SK-N-SH (cell line): ENCODE measurements at regions of chr5 and their contacts with region 1.

Region 1: DNA sequence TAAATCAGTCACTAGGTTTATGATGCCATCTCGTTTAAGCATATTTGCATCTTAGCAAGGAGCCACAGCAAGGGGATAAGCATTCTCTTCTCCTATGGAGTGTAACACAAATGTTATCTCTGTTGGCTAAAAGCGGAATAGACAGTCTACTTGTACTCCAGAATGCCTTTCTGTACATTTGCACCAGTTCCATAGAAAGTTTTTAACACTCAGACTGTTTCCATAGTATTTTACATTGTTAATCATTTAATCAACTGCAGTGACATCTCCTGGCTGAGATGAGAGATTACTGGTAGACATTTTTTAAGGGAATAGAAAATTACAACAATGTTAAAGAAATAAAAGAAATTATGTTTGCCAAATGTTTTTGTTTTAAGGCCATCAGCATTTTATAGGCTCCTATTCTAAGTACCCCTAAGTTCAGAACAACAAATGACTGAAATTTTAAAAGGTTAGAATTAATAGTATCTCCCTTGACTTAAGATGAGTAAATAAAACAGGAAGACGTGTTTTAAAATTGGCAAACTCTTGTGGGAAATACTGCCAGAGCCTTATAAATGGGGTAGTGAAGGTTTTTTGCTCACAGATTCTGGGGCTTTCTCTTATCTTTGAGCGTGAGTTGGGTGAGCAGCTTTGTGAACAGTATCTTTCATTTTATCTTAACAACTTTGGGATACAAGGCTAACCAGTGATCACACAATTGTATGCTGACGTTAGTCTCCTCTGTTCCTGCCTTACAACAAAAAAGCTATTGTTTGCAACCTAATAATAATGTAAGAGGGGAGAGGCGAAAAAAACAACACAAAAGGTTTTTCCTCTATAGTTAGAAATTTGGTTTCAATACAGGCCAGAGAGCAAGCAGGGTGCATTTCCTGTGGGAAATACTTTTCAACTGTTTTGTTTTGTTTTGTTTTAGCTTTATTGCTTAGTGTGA is 294.3 kb downstream of the FBXL7 start:
- DNase-seq: peak; percentile 26
- H3K4me3 ChIP-seq: no peak overlapping the region
- H3K27ac ChIP-seq: peak overlapping the region in 1 of 2 experiments; percentile 67; a peak in 2 of 4 replicates
- H3K4me1 ChIP-seq: peaks cover 12 to 31% of the 10 kb centered on the region in 2 experiments
- H3K27me3 ChIP-seq: no peaks in the 10 kb centered on the region
- CTCF ChIP-seq: peak; percentile 62
- EP300 ChIP-seq: no peak
- RAD21 ChIP-seq: peak; percentile 67

Region 2: DNA sequence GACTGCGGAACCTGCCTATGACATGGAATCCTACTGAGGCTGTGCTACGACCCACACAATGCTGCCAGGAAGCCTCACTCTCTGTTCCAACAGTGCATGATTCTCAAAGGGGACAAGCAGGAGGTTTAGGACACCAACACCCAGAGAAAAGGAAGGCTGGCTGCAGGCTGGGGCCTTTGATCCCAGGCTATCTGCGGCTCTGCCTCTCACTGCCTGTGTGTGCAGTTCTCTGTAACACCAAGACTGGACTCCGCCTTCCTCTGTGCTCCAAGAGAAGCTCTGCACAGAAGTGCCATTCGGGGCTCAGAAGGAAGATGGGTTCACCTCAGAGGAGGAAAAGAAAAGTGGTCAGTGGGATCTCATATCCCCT is 943.3 kb before region 1 on chr5:
- CTCF ChIA-PET with region 1: no interaction called
- POLR2A ChIA-PET with region 1: no interaction called
- DNase-seq: no peak
- H3K4me3 ChIP-seq: no peak overlapping the region
- H3K27ac ChIP-seq: no peak overlapping the region
- H3K4me1 ChIP-seq: peaks cover 0 to 17% of the 10 kb centered on the region in 2 experiments; a peak in 1 of 4 replicates
- H3K27me3 ChIP-seq: no peaks in the 10 kb centered on the region
- CTCF ChIP-seq: no peak
- EP300 ChIP-seq: no peak
- RAD21 ChIP-seq: no peak

Region 3: DNA sequence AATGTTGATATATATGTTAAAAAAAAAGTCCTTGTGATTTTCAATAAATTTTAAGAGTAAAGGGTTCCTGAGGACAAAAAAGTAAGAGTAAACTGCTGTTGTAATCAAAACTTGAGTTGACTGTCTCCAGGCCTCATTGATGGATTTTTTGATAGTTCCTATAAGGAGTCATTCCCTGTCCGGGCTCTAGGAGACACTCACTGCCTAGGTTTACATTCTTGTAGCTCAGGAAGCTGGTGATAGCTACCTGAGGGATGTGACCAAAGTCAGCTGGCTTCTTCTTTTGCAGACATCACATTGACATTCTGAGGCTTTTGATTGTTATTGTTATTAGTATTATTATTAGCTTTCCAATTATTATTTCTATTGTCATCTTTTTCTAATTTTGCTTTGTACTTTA is 410.9 kb before region 1 on chr5:
- CTCF ChIA-PET with region 1: interaction called, 18 read pairs
- POLR2A ChIA-PET with region 1: no interaction called
- DNase-seq: peak; percentile 61
- H3K4me3 ChIP-seq: no peak overlapping the region
- H3K27ac ChIP-seq: no peak overlapping the region
- H3K4me1 ChIP-seq: peaks cover 0 to 10% of the 10 kb centered on the region in 2 experiments; a peak in 1 of 4 replicates
- H3K27me3 ChIP-seq: no peaks in the 10 kb centered on the region
- CTCF ChIP-seq: peak; percentile 60
- EP300 ChIP-seq: no peak
- RAD21 ChIP-seq: peak; percentile 91

Region 4: GRCh38 chr5:15774632-15775031 is 19.7 kb before region 1 on chr5:
- CTCF ChIA-PET with region 1: interaction called, 10 read pairs
- POLR2A ChIA-PET with region 1: no interaction called
- DNase-seq: no peak
- H3K4me3 ChIP-seq: no peak overlapping the region
- H3K27ac ChIP-seq: no peak overlapping the region
- H3K4me1 ChIP-seq: no peaks in the 10 kb centered on the region; a peak in 1 of 4 replicates
- H3K27me3 ChIP-seq: no peaks in the 10 kb centered on the region
- CTCF ChIP-seq: no peak
- EP300 ChIP-seq: no peak
- RAD21 ChIP-seq: no peak